WTC11 (cell line): ENCODE measurements at regions of chr19 and their contacts with region 1.

Region 1: DNA sequence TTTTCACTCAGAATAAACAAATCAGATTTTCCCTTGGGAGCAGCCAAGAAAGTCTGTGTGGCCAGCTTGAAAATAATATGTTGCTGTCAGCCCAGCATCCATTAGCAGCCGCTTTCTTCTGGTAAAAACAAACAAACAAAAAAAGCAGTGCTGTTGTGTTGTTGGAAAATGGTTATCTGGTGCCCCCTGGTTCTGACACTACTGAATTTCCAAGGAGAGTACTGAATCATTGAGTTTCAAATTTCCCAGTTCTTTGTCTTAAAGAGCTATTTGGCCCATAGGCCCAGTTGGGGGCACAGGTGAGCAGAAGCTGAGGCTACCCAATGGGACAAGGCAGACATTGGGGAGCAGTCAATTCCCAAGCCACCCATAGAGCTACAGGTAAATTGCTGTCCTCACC is 995.9 kb downstream of the UQCRFS1 start:
- DNase-seq: peak; percentile 50
- ATAC-seq: peak; percentile 92
- H3K4me3 Mint-ChIP-seq: no peak overlapping the region
- H3K27ac Mint-ChIP-seq: no peak overlapping the region
- H3K4me1 Mint-ChIP-seq: peaks cover 25% of the 10 kb centered on the region
- H3K27me3 Mint-ChIP-seq: no peaks in the 10 kb centered on the region; the same call in 1 of the 2 replicates
- CTCF ChIP-seq: peak; percentile 22; the same call in 1 of the 2 replicates

Region 2: DNA sequence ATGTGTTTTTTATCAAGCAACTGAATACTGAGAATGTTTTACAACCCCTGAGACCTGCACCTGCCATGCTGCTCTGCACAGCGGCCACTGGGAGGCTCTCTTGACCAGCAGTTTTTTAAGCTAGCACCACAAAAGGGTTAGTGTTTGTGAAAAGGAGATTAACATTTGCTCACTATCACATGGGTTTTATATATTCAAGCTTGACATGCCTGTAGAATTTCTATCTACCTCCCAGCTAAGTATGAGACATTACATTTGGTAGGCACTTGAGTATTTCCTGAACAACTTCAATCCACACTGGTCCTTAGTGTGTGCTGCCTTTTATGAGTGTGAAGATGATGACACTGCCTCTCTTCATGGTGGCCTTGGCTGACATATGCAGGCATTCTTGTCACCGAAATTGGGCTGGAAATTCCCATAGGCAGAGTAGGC is 242.9 kb before region 1 on chr19:
- CTCF ChIA-PET with region 1: interaction called, 80 read pairs
- POLR2A ChIA-PET with region 1: no interaction called
- DNase-seq: peak; percentile 52
- ATAC-seq: peak; percentile 78
- H3K4me3 Mint-ChIP-seq: no peak overlapping the region
- H3K27ac Mint-ChIP-seq: no peak overlapping the region
- H3K4me1 Mint-ChIP-seq: peaks cover 4% of the 10 kb centered on the region; the same call in 1 of the 2 replicates
- H3K27me3 Mint-ChIP-seq: no peaks in the 10 kb centered on the region; the same call in 1 of the 2 replicates
- CTCF ChIP-seq: peak; percentile 53; the same call in 1 of the 2 replicates

Region 3: GRCh38 chr19:28023064-28023463 is 194.0 kb before region 1 on chr19:
- CTCF ChIA-PET with region 1: interaction called, 15 read pairs
- POLR2A ChIA-PET with region 1: no interaction called
- DNase-seq: no peak
- ATAC-seq: no peak
- H3K4me3 Mint-ChIP-seq: no peak overlapping the region
- H3K27ac Mint-ChIP-seq: no peak overlapping the region
- H3K4me1 Mint-ChIP-seq: peaks cover 35% of the 10 kb centered on the region
- H3K27me3 Mint-ChIP-seq: no peaks in the 10 kb centered on the region
- CTCF ChIP-seq: no peak

Region 4: GRCh38 chr19:28234637-28235036 is 17.6 kb after region 1 on chr19:
- CTCF ChIA-PET with region 1: interaction called, 23 read pairs
- POLR2A ChIA-PET with region 1: no interaction called
- DNase-seq: no peak
- ATAC-seq: no peak
- H3K4me3 Mint-ChIP-seq: no peak overlapping the region
- H3K27ac Mint-ChIP-seq: no peak overlapping the region
- H3K4me1 Mint-ChIP-seq: peaks cover 10% of the 10 kb centered on the region
- H3K27me3 Mint-ChIP-seq: no peaks in the 10 kb centered on the region
- CTCF ChIP-seq: no peak